Caco-2 (cell line): ENCODE measurements at regions of chr10 and their contacts with region 1.

Region 1: DNA sequence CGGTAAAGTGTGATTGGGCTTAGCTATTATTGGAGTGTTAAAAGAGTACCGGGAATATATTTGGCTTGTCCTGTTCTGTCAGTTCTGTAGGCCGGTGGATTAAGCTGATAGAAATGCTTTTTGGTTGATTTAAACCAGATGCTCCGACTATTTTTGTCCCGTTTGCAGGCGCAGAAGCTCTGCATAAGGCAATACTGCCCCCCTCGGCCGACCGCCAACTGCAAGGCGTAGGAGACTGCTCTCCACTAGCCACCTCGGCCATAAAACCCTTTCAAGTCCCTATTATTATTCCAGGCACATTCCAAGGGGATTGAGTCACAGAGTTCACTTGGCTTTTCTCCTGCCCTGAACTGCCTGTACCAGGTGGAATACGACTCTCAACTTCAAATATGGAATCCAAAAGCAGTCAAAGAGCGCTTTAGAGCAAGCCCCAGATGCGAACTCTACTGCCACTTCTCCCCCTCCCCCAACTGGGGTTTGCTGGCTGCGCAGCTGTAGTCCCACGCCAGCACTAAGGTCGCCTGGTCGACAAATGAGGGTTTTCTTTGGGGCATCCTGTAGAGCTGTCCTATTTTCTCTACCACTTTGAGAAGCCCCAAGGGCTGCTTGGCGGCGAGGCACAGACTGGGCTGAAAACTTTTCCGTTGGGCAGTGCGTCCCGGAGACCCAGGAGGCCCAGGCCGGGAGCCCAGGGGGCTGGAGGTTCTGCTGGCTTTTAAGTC is 108.3 kb downstream of the REEP3 start:
- DNase-seq: peak; percentile 98
- H3K4me3 ChIP-seq: peak overlapping the region; percentile 64
- H3K4me3 Mint-ChIP-seq: peak overlapping the region; percentile 82
- H3K27ac Mint-ChIP-seq: peak overlapping the region; percentile 95
- H3K4me1 ChIP-seq: peaks cover 44% of the 10 kb centered on the region
- H3K4me1 Mint-ChIP-seq: peaks cover 36% of the 10 kb centered on the region
- H3K27me3 ChIP-seq: no peaks in the 10 kb centered on the region
- H3K27me3 Mint-ChIP-seq: no peaks in the 10 kb centered on the region
- CTCF ChIP-seq: peak; percentile 94 to 99

Region 2: DNA sequence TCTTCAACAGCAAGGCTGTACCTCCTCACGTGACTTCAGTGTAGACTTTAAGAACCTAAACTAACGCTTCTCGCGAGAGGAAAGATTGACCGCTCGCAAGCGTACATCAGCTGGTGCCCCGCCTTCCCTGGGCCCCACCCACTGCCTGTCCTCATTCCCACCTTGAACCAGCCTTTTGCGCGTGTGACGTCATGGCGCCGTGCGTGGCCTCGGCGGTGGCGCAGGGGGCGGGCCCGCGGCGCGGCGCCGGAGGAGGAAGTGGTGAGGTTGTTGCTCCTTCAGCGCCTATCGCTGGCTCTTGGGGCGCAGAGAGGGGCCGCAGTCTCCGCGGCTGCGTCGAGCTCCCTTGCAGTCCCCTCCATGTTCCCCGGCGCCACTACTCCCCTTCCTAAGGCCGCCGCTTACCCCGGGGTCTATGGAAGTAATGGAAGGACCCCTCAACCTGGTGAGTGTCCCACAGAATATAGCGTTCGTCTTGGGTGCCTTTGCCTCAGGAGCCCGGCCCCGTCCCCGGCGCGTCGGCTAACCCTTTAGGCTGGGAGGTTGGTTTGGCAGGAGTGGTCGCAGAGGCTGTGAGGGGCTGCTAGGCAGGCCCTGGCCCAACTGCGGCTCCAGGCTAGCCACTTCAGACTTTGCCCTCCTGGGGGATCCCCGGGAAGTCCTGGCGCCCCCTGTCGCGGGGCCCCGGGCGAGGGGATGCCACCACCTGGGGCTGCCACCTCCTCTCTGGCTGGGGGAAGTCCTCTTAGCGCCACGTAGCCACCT is 496.3 kb before region 1 on chr10 and contains the start of gene NRBF2:
- CTCF ChIA-PET with region 1: interaction called, 3 read pairs
- POLR2A ChIA-PET with region 1: interaction called, 7 read pairs
- intact Hi-C with region 1: loop called (anchors 1 kb)
- DNase-seq: peak; percentile 100
- H3K4me3 ChIP-seq: peak within 1 kb of the TSS; percentile 60
- H3K4me3 Mint-ChIP-seq: peak within 1 kb of the TSS; percentile 94
- H3K27ac Mint-ChIP-seq: peak within 1 kb of the TSS; percentile 91
- H3K4me1 ChIP-seq: peaks cover 14% of the 10 kb centered on the region
- H3K4me1 Mint-ChIP-seq: peaks cover 35% of the 10 kb centered on the region
- H3K27me3 ChIP-seq: no peaks in the 10 kb centered on the region
- H3K27me3 Mint-ChIP-seq: no peaks in the 10 kb centered on the region
- CTCF ChIP-seq: peak; percentile 32 to 71
- total RNA-seq, gene NRBF2: 49.1 and 52.5 TPM in 2 replicates

Region 3: GRCh38 chr10:63268798-63269503 is 360.6 kb before region 1 on chr10:
- CTCF ChIA-PET with region 1: interaction called, 5 read pairs
- POLR2A ChIA-PET with region 1: interaction called, 23 read pairs
- intact Hi-C with region 1: loop called (anchors 1 kb)
- DNase-seq: peak; percentile 90
- H3K4me3 ChIP-seq: peak overlapping the region; percentile 54
- H3K4me3 Mint-ChIP-seq: peak overlapping the region; percentile 97
- H3K27ac Mint-ChIP-seq: peak overlapping the region; percentile 98
- H3K4me1 ChIP-seq: peaks cover 19% of the 10 kb centered on the region
- H3K4me1 Mint-ChIP-seq: peaks cover 28% of the 10 kb centered on the region
- H3K27me3 ChIP-seq: no peaks in the 10 kb centered on the region
- H3K27me3 Mint-ChIP-seq: no peaks in the 10 kb centered on the region
- CTCF ChIP-seq: peak; percentile 39 to 51

Region 4: DNA sequence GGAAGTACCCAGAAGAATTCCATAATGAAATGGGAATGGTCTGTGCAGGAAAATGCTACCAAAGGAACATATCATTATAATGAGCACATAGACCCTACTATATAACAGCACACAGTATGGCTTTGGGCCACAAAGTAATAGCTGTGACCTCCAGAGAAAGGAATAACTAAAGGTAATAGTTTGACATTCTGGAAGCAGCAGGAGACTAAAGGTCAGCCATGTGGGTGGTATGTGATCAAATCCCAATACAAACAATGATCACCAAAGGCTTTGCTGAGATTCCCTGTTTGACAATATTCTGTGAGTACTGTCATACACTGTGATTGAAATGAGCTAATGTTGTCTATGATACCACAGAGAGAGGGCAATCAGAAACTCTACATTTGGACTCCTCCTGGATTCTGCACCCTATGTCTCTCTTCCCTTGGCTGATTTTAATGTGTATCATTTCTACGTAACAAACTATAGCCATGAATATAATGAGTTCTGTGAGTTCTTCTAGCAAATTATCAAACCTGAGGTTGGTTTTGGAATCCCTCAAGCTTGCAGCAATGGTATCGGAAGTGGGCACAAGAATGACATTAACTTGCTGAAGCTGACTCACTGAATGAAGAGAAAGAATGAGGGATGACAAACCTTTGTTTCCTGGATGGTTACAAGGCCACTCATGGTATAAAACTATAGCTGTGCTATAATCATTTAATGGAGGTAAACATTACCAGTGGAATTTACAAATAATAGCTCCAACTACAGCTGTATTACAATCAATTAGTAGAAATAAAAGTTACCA is 263.4 kb before region 1 on chr10:
- CTCF ChIA-PET with region 1: no interaction called
- POLR2A ChIA-PET with region 1: no interaction called
- intact Hi-C with region 1: loop called (anchors 5 kb)
- DNase-seq: peak in 1 of 2 experiments; percentile 44
- H3K4me3 ChIP-seq: no peak overlapping the region
- H3K4me3 Mint-ChIP-seq: no peak overlapping the region
- H3K27ac Mint-ChIP-seq: peak overlapping the region; percentile 21
- H3K4me1 ChIP-seq: peaks cover 36% of the 10 kb centered on the region
- H3K4me1 Mint-ChIP-seq: peaks cover 42% of the 10 kb centered on the region
- H3K27me3 ChIP-seq: no peaks in the 10 kb centered on the region
- H3K27me3 Mint-ChIP-seq: no peaks in the 10 kb centered on the region
- CTCF ChIP-seq: no peak

Region 5: GRCh38 chr10:63521416-63522276 is 107.9 kb before region 1 on chr10:
- CTCF ChIA-PET with region 1: no interaction called
- POLR2A ChIA-PET with region 1: interaction called, 7 read pairs
- intact Hi-C with region 1: loop called (anchors 1 kb)
- DNase-seq: peak; percentile 79 to 86
- H3K4me3 ChIP-seq: peak overlapping the region; percentile 96
- H3K4me3 Mint-ChIP-seq: peak overlapping the region; percentile 83
- H3K27ac Mint-ChIP-seq: peak overlapping the region; percentile 92
- H3K4me1 ChIP-seq: peaks cover 17% of the 10 kb centered on the region
- H3K4me1 Mint-ChIP-seq: peaks cover 43% of the 10 kb centered on the region
- H3K27me3 ChIP-seq: no peaks in the 10 kb centered on the region
- H3K27me3 Mint-ChIP-seq: no peaks in the 10 kb centered on the region
- CTCF ChIP-seq: no peak

Region 6: DNA sequence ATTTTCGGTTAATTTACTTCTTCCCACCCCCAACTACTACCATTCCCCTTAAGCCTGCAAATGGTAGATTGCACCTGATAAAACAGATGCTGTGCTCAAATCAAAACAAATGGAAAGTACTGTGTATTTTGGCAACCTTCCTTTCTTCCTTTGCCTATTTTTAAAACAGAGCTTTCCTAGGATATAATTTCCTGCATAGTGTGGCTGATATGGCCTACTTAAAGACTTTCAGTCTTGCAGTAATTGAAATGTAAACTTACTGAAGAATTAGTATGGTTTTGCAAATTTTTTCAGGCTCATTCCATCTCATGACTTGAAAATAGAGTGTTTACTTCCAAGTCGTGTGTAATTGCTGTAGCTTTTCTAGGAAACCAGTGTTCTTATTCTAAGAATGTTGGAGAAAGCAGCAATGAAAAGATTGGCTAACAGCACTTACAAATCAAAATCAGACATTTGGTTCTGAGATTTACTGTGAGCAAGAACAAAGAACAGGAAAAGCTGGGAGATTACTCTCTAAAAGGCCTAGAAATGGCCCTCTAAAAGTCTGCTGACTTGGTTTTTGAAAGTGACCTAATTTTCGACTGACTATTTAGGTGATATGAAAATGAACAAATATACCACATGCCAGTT is 56.3 kb before region 1 on chr10:
- CTCF ChIA-PET with region 1: no interaction called
- POLR2A ChIA-PET with region 1: no interaction called
- intact Hi-C with region 1: no loop called
- DNase-seq: no peak
- H3K4me3 ChIP-seq: no peak overlapping the region
- H3K4me3 Mint-ChIP-seq: no peak overlapping the region
- H3K27ac Mint-ChIP-seq: no peak overlapping the region
- H3K4me1 ChIP-seq: no peaks in the 10 kb centered on the region
- H3K4me1 Mint-ChIP-seq: no peaks in the 10 kb centered on the region
- H3K27me3 ChIP-seq: no peaks in the 10 kb centered on the region
- H3K27me3 Mint-ChIP-seq: no peaks in the 10 kb centered on the region
- CTCF ChIP-seq: no peak

Region 7: GRCh38 chr10:63651864-63652263 is 22.3 kb after region 1 on chr10:
- CTCF ChIA-PET with region 1: no interaction called
- POLR2A ChIA-PET with region 1: no interaction called
- intact Hi-C with region 1: no loop called
- DNase-seq: no peak
- H3K4me3 ChIP-seq: no peak overlapping the region
- H3K4me3 Mint-ChIP-seq: no peak overlapping the region
- H3K27ac Mint-ChIP-seq: no peak overlapping the region
- H3K4me1 ChIP-seq: no peaks in the 10 kb centered on the region
- H3K4me1 Mint-ChIP-seq: no peaks in the 10 kb centered on the region
- H3K27me3 ChIP-seq: no peaks in the 10 kb centered on the region
- H3K27me3 Mint-ChIP-seq: no peaks in the 10 kb centered on the region
- CTCF ChIP-seq: no peak

Region 8: GRCh38 chr10:63767138-63767801 is 137.7 kb after region 1 on chr10:
- CTCF ChIA-PET with region 1: no interaction called
- POLR2A ChIA-PET with region 1: no interaction called
- intact Hi-C with region 1: loop called (anchors 2 kb)
- DNase-seq: peak in 1 of 2 experiments; percentile 36
- H3K4me3 ChIP-seq: no peak overlapping the region
- H3K4me3 Mint-ChIP-seq: no peak overlapping the region
- H3K27ac Mint-ChIP-seq: no peak overlapping the region
- H3K4me1 ChIP-seq: peaks cover 20% of the 10 kb centered on the region
- H3K4me1 Mint-ChIP-seq: peaks cover 32% of the 10 kb centered on the region
- H3K27me3 ChIP-seq: no peaks in the 10 kb centered on the region
- H3K27me3 Mint-ChIP-seq: no peaks in the 10 kb centered on the region
- CTCF ChIP-seq: peak; percentile 51 to 65